Activated naive CD4-positive, alpha-beta T cell treated with anti-CD3 and anti-CD28 coated beads for 36 hours (primary cell): ENCODE measurements at regions of chr12 and their contacts with region 1.

Region 1: DNA sequence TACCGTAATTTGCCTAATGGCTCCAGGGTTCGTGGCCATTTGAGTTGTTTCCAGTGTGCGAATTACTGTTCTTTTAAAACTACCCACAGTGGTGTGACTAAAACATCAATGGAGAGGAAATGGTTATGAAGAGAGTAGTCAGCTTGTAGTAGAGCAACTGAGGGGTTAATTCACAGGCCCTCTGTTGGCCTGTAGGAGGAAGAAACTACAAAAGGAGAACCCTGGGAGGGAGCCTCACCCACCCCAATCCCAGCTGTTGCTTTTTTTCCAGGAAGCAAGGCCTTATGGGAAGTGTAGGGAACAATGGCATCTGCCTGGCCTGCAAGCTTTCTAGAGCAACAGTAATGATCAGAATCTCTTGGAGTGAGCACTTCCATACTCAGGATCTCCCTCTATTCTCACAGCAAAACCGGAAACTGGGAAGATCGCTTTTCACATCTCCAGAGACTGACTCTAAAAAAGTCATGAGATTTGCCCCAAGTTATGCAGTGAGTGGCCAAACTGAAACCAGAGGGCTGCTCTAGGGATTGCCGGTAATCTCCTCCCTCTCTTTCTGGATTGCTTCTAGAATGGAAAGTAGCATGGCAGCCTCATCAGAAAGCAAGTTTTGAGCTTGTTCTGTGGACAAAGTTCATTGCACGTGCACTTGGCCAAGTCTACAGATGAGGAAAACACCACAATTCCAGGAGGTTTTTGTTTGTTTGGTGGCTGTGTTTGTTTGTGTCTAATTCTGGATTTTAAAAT is 125.3 kb upstream of the PWP1 start:
- DNase-seq: no peak
- H3K4me3 Mint-ChIP-seq: no peak overlapping the region
- H3K27ac Mint-ChIP-seq: no peak overlapping the region
- H3K4me1 Mint-ChIP-seq: no peaks in the 10 kb centered on the region
- H3K27me3 Mint-ChIP-seq: no peaks in the 10 kb centered on the region

Region 2: GRCh38 chr12:107515446-107515958 is 44.8 kb before region 1 on chr12:
- CTCF ChIA-PET with region 1: no interaction called
- intact Hi-C with region 1: loop called (anchors 1 kb)
- DNase-seq: peak; percentile 64
- H3K4me3 Mint-ChIP-seq: no peak overlapping the region
- H3K27ac Mint-ChIP-seq: no peak overlapping the region
- H3K4me1 Mint-ChIP-seq: peaks cover 12% of the 10 kb centered on the region
- H3K27me3 Mint-ChIP-seq: no peaks in the 10 kb centered on the region

Region 3: GRCh38 chr12:107545737-107546353 is 14.5 kb before region 1 on chr12:
- CTCF ChIA-PET with region 1: no interaction called
- intact Hi-C with region 1: no loop called
- DNase-seq: no peak
- H3K4me3 Mint-ChIP-seq: no peak overlapping the region
- H3K27ac Mint-ChIP-seq: no peak overlapping the region
- H3K4me1 Mint-ChIP-seq: peaks cover 8% of the 10 kb centered on the region
- H3K27me3 Mint-ChIP-seq: no peaks in the 10 kb centered on the region